H1 (cell line): ENCODE measurements at regions of chr6 and their contacts with region 1.

Region 1: GRCh38 chr6:28399350-28400121 is at the start of gene ZSCAN12:
- DNase-seq: peak; percentile 62 to 91
- H3K4me3 ChIP-seq: peak within 1 kb of the TSS; percentile 67 to 97 (median 93)
- H3K27ac ChIP-seq: peak within 1 kb of the TSS; percentile 80
- H3K4me1 ChIP-seq: peaks cover 0 to 2% (median 0%) of the 10 kb centered on the region in 4 experiments; a peak in 4 of 7 replicates
- H3K27me3 ChIP-seq: peaks cover 0 to 3% (median 0%) of the 10 kb centered on the region in 4 experiments; a peak in 2 of 7 replicates
- CTCF ChIP-seq: peak; percentile 43 to 54 (median 45)
- EP300 ChIP-seq: peak in 1 of 2 experiments; percentile 62; a peak in 1 of 3 replicates
- POLR2A ChIP-seq: peak; percentile 74 to 92
- RAD21 ChIP-seq: peak in 1 of 2 experiments; percentile 30; a peak in 1 of 4 replicates
- total RNA-seq, gene ZSCAN12: 8.6 and 9.6 TPM in 2 replicates

Region 2: GRCh38 chr6:28443112-28443773 is 43.7 kb after region 1 on chr6 and contains the start of gene ZSCAN23:
- CTCF ChIA-PET with region 1: interaction called, 3 read pairs
- POLR2A ChIA-PET with region 1: interaction called, 21 read pairs
- DNase-seq: peak; percentile 58 to 86
- H3K4me3 ChIP-seq: peak within 1 kb of the TSS; percentile 88 to 91 (median 90)
- H3K27ac ChIP-seq: peak within 1 kb of the TSS; percentile 94
- H3K4me1 ChIP-seq: no peaks in the 10 kb centered on the region
- H3K27me3 ChIP-seq: no peaks in the 10 kb centered on the region
- CTCF ChIP-seq: peak in 1 of 3 experiments; percentile 4; a peak in 1 of 4 replicates
- EP300 ChIP-seq: no peak
- POLR2A ChIP-seq: peak; percentile 95 to 97
- RAD21 ChIP-seq: no peak
- total RNA-seq, gene ZSCAN23: 4.2 and 5.3 TPM in 2 replicates

Region 3: DNA sequence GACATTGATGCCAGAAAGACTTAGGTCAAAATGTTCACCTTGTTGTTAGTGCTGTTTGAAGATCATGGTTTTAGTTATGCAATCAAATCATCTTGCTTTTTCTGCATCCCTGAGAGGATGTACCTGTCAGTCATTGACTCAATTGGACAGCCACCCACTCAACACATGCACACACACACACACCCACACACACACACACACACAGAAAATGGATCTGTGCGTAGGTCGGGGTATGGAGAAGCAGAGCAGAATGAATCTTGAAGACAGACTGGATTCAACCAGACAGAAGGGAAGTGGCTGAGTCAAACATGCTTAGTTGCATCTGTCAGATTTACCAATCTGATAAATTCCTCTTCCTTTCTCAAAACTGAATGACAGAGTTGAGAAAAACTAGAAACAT is 62.9 kb after region 1 on chr6:
- CTCF ChIA-PET with region 1: no interaction called
- POLR2A ChIA-PET with region 1: no interaction called
- DNase-seq: no peak
- H3K4me3 ChIP-seq: no peak overlapping the region
- H3K27ac ChIP-seq: no peak overlapping the region
- H3K4me1 ChIP-seq: no peaks in the 10 kb centered on the region
- H3K27me3 ChIP-seq: peaks cover 0 to 4% (median 1%) of the 10 kb centered on the region in 4 experiments; a peak in 3 of 7 replicates
- CTCF ChIP-seq: no peak
- EP300 ChIP-seq: no peak
- POLR2A ChIP-seq: no peak
- RAD21 ChIP-seq: no peak

Region 4: DNA sequence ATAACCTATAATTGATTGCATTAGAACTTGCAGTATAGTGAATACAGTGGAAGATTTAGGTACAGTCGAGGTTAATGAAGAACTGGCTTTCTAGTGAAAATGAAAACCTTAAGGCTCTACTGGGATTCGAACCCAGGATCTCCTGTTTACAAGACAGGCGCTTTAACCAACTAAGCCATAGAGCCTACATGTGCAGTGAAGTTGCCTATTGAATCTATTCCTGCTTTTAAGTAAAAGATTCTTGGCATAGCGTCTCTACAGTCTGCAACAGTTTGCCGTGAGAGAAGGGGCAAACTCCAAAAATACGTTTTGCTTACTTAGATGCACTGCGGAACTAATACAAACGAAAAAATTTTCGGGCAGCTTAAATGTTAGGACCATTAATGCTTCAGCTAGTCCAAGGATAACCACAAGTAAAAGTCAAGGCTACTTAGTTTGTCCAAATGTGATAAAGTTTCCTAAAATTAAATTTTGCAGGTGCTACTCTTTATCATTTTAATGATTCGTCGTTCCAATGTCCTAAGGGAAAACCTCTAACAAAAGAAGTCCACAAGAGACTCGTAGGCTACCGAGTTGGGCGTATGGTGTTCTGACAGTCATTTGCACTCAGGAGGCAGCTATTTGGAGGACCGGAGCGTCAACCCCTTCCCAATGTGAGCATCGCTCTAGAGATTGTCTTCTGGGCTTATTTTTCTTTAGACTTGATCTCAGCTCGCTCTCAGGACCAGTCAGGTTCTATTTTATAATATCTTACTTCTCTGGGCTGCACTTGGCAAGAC is 75.1 kb after region 1 on chr6:
- CTCF ChIA-PET with region 1: no interaction called
- POLR2A ChIA-PET with region 1: no interaction called
- DNase-seq: peak; percentile 54
- H3K4me3 ChIP-seq: peak overlapping the region; percentile 72 to 88 (median 77)
- H3K27ac ChIP-seq: no peak overlapping the region
- H3K4me1 ChIP-seq: no peaks in the 10 kb centered on the region
- H3K27me3 ChIP-seq: peaks cover 0 to 2% (median 0%) of the 10 kb centered on the region in 4 experiments; a peak in 1 of 7 replicates
- CTCF ChIP-seq: no peak
- EP300 ChIP-seq: no peak
- POLR2A ChIP-seq: no peak
- RAD21 ChIP-seq: no peak